Naive thymus-derived CD8-positive, alpha-beta T cell (primary cell): ENCODE measurements at regions of chr19 and their contacts with region 1.

Region 1: DNA sequence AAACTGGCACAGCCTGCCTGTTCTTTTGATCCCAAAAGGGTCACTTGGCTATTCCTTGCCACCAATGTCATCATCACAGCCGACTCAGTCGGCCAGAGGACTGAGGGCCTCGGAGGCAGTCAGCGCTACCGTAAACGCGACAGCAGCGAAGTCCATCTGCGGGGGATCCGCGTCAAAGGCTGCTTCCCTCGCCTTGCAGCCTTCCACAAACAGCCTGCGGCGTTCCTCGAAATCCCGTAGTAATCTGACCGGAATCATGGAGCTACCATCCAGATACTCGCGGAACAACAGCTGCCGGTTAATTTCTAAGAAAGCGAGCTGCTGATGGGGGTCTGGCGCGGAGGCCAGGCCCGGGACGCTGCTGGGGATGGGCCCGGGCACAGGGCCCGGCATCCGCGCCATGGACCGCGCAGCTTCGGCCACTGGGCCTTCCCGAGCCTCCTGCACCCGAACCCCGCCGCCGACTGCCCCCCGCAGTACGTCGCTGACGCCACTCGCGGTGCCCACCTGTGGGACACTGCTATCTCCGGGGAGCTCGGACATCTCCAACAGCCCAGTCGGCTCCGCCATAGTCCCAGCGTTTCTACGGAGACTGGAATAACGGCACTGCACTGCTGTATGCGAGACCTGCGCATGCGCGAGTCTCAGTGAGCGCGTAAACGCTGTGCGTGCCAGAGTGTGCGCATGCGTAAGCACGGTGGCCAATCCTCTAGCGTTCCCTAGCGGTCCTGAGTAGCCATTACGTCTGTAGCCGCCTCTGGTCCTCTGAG is at the start of gene EID2B:
- DNase-seq: peak; percentile 90 to 97 (median 95)
- ATAC-seq: peak; percentile 90 to 91
- H3K4me3 Mint-ChIP-seq: peak within 1 kb of the TSS; percentile 88 to 97 (median 92)
- H3K27ac Mint-ChIP-seq: peak within 1 kb of the TSS; percentile 83 to 96 (median 94)
- H3K4me1 Mint-ChIP-seq: peaks cover 10 to 53% (median 28%) of the 10 kb centered on the region in 4 donors
- H3K27me3 Mint-ChIP-seq: no peaks in the 10 kb centered on the region
- polyA plus RNA-seq, gene EID2B: 4.9 to 7.6 (median 6.4) TPM

Region 2: DNA sequence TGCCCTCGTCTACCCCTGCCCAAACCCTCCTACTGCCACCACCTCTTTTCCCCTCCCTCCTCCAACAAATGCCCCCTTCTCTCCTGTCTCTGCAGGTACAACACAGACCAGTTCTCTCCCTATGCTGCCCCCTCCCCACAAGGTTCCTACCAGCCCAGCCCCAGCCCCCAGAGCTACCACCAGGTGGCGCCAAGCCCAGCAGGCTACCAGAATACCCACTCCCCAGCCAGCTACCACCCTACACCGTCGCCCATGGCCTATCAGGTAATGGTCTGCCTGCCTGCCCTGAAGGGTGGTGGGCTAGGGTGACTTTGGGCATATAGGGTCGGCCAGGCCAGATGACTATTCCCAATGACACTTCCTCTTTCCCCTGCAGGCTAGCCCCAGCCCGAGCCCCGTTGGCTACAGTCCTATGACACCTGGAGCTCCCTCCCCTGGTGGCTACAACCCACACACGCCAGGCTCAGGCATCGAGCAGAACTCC is 58.2 kb before region 1 on chr19:
- POLR2A ChIA-PET with region 1: interaction called, 10 read pairs
- DNase-seq: peak; percentile 58 to 87 (median 72)
- ATAC-seq: peak; percentile 84 to 87
- H3K4me3 Mint-ChIP-seq: no peak overlapping the region
- H3K27ac Mint-ChIP-seq: peak overlapping the region in 8 of 10 donors; percentile 41 to 89 (median 74)
- H3K4me1 Mint-ChIP-seq: peaks cover 0 to 14% (median 8%) of the 10 kb centered on the region in 4 donors
- H3K27me3 Mint-ChIP-seq: no peaks in the 10 kb centered on the region